Activated naive CD4-positive, alpha-beta T cell treated with anti-CD3 and anti-CD28 coated beads for 36 hours (primary cell): ENCODE measurements at regions of chr2 and their contacts with region 1.

Region 1: DNA sequence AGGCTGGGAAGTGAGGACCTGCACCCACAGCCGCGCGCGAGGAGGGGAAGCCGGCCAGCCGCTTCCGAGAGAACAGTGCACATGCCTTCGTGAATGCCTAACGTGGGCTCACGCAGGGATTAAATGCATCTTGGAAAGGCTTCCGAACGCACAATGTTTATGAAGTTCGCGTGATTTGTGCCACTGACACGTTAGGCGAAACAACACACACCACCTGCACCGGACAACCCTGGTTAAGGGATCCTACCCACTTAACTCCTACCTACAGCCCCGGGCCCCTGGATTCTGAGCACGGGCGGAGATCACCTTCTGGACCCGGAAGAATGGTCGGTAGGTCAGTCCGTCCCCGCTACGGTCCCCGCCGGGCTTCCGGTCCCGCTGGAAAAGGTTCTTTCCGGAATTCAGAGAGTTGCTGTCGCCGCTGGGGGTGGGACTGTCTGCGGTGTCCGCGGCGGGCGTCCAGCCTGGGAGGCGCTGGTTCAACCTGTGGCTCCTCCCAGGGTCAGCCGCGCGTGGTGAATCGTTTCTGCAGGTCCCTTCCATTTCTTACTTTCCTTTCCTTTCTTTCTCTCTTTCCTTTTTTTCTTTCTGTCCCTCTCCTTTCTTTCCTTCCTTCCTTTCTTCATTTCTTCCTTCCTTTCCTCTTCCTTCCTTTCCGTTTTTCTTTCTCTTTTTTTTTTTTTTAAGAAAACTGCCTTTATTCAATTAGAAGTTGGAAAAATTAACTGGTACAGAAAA is at the start of gene MTIF2:
- DNase-seq: peak; percentile 93
- H3K4me3 Mint-ChIP-seq: peak within 1 kb of the TSS; percentile 89
- H3K27ac Mint-ChIP-seq: peak within 1 kb of the TSS; percentile 93
- H3K4me1 Mint-ChIP-seq: peaks cover 14% of the 10 kb centered on the region
- H3K27me3 Mint-ChIP-seq: no peaks in the 10 kb centered on the region
- total RNA-seq, gene MTIF2: 43.9 to 44.2 TPM

Region 2: GRCh38 chr2:55232084-55232862 is 36.8 kb before region 1 on chr2 and contains the starts of genes CLHC1 and RPS27A:
- CTCF ChIA-PET with region 1: no interaction called
- intact Hi-C with region 1: loop called (anchors 1 kb)
- DNase-seq: peak; percentile 94
- H3K4me3 Mint-ChIP-seq: peak within 1 kb of the TSS; percentile 97
- H3K27ac Mint-ChIP-seq: peak within 1 kb of the TSS; percentile 95
- H3K4me1 Mint-ChIP-seq: peaks cover 52% of the 10 kb centered on the region
- H3K27me3 Mint-ChIP-seq: no peaks in the 10 kb centered on the region
- total RNA-seq, gene CLHC1: 2.4 to 3.1 TPM
- total RNA-seq, gene RPS27A: 1,468 to 1,556 TPM

Region 3: DNA sequence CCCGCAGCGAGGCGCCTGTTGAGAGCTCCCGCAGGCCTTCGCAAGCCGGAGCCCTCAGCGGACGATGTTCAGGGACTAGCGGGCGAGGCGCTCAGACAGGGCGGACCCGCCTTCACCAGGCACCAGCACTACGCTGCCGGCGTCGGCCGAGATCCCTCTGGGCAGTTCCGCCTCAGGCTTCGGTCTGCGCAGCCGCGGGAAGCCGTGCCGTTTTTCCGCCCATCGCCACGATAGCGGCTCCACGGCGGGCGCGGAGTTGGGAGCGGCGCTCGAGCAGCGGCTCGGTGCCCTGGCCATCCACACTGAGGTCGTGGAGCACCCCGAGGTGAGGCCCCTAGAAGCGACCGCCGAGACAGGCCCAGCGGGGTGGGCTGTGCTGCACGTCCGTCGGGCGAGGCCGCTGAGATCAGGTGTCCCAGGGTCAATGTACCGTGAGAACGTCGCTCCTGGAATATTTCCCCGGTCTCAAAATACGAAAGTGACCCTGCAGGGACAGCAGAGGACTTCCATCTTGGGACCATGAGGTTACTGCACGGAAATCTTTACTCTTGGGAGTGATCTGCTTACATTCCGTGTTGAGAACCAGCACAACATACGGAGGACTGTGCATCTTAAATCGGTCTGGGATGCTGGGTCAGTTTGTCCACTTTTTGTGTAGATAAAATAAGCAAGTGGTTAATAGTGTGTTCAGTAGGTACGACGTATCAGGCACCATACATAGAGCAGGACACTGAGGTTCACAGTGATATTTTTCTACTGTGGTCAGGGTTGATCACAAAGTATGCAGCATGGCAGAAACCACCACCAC is 13.2 kb after region 1 on chr2:
- CTCF ChIA-PET with region 1: interaction called, 3 read pairs
- intact Hi-C with region 1: loop called (anchors 1 kb)
- DNase-seq: peak; percentile 85
- H3K4me3 Mint-ChIP-seq: peak overlapping the region; percentile 84
- H3K27ac Mint-ChIP-seq: peak overlapping the region; percentile 85
- H3K4me1 Mint-ChIP-seq: peaks cover 22% of the 10 kb centered on the region
- H3K27me3 Mint-ChIP-seq: no peaks in the 10 kb centered on the region

Region 4: GRCh38 chr2:55419679-55420438 is 150.8 kb after region 1 on chr2 and contains the start of gene CCDC88A:
- CTCF ChIA-PET with region 1: interaction called, 3 read pairs
- intact Hi-C with region 1: loop called (anchors 1 kb)
- DNase-seq: peak; percentile 89
- H3K4me3 Mint-ChIP-seq: peak within 1 kb of the TSS; percentile 86
- H3K27ac Mint-ChIP-seq: peak within 1 kb of the TSS; percentile 53
- H3K4me1 Mint-ChIP-seq: peaks cover 18% of the 10 kb centered on the region
- H3K27me3 Mint-ChIP-seq: peaks cover 10% of the 10 kb centered on the region
- total RNA-seq, gene CCDC88A: 9.7 to 10.7 TPM

Region 5: GRCh38 chr2:55519938-55520885 is 251.1 kb after region 1 on chr2:
- CTCF ChIA-PET with region 1: no interaction called
- intact Hi-C with region 1: loop called (anchors 1 kb)
- DNase-seq: peak; percentile 45
- H3K4me3 Mint-ChIP-seq: peak overlapping the region; percentile 99
- H3K27ac Mint-ChIP-seq: peak overlapping the region; percentile 96
- H3K4me1 Mint-ChIP-seq: peaks cover 14% of the 10 kb centered on the region
- H3K27me3 Mint-ChIP-seq: no peaks in the 10 kb centered on the region